ENCODE measurements at regions of chr17 and their contacts with region 1.

Region 1: DNA sequence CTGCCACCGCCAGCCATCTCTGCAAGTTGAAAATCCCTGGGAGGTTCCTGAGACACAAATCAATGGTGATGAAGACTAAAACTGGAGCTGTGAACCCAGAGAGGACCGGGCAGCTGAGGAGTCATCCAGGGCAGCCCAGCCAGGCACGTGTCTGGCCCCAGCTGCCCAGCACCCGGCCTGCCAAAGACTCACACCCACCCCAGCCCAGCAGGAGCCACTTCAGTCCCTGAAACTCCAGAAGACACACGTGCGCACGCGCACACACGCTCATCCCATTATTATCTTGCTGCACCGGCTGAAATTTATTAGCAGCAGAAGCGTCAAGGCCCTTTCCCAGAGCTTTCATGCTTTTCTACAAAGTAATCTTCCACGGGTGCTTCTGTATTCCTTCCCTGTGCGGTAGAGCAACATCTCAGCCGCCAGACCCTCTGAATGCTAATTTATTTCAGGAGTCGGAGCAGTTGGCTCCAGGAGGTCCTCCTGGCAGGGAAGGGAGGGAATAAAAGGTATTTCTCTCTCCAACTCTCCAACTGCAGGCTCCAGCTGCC is 59.8 kb upstream of the RBFOX3 start:
- DNase-seq: no peak
- H3K4me3 ChIP-seq: no peak overlapping the region
- H3K27ac ChIP-seq: no peak overlapping the region
- H3K4me1 ChIP-seq: peaks cover 0 to 10% (median 0%) of the 10 kb centered on the region in 4 experiments; a peak in 1 of 7 replicates
- H3K27me3 ChIP-seq: no peaks in the 10 kb centered on the region; a peak in 3 of 7 replicates
- CTCF ChIP-seq: no peak
- EP300 ChIP-seq: no peak
- POLR2A ChIP-seq: no peak
- RAD21 ChIP-seq: no peak

Region 2: GRCh38 chr17:79658811-79659207 is 11.8 kb before region 1 on chr17:
- CTCF ChIA-PET with region 1: interaction called, 29 read pairs
- POLR2A ChIA-PET with region 1: no interaction called
- DNase-seq: peak in 1 of 2 experiments; percentile 64
- H3K4me3 ChIP-seq: no peak overlapping the region
- H3K27ac ChIP-seq: no peak overlapping the region
- H3K4me1 ChIP-seq: peaks cover 0 to 6% (median 4%) of the 10 kb centered on the region in 4 experiments; a peak in 5 of 7 replicates
- H3K27me3 ChIP-seq: no peaks in the 10 kb centered on the region; a peak in 1 of 7 replicates
- CTCF ChIP-seq: peak; percentile 57 to 87 (median 86)
- EP300 ChIP-seq: no peak
- POLR2A ChIP-seq: no peak
- RAD21 ChIP-seq: peak; percentile 56 to 66

Region 3: GRCh38 chr17:79951361-79952264 is 281.0 kb after region 1 on chr17:
- CTCF ChIA-PET with region 1: no interaction called
- POLR2A ChIA-PET with region 1: no interaction called
- DNase-seq: no peak
- H3K4me3 ChIP-seq: peak overlapping the region in 1 of 4 experiments; percentile 54; a peak in 1 of 8 replicates
- H3K27ac ChIP-seq: no peak overlapping the region; the same call in 1 of the 2 replicates
- H3K4me1 ChIP-seq: peaks cover 20 to 64% (median 47%) of the 10 kb centered on the region in 4 experiments
- H3K27me3 ChIP-seq: no peaks in the 10 kb centered on the region
- CTCF ChIP-seq: no peak
- EP300 ChIP-seq: no peak
- POLR2A ChIP-seq: no peak
- RAD21 ChIP-seq: no peak

Measured in H1 (cell line).